Left ventricle myocardium superior (tissue), 1 donor: ENCODE measurements at regions of chr11 and their contacts with region 1.

Region 1: DNA sequence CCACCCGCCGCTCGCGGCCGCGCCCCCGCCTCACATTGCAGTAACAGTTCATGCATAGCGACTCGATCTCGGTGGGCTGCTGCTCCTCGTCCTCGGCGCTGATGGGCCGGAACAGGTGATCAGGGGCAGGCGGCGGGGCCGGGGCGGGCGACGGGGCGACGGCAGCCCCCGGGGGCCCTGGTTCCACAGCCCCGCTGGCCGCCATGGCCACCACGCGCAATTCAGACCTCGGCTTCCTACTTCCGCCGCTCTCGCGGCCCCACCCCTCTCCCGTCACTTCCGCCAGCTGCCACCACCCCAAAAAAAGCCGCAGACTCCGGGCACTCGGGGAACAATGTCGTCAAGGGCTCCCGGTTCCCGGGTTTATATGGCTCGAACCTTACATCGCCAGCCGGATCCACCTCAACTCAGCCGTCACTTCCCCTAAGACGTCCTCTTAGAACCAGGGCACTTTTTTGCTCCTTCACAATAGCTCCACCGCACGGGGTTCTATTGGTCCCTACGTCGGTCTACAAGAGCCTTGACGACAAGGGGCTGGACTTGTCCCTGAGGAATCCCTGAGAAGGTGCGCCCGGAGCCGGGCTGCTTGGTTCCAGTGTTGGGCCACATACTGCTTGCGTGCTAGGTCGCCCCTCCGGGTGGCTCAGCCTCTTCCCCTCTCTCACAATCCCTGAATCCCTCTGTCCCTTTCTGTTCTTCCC is at the start of gene ZPR1:
- DNase-seq: peak; percentile 89
- ATAC-seq: peak; percentile 87
- total RNA-seq, gene ZPR1: 18.2 TPM

Region 2: GRCh38 chr11:116835791-116836631 is 48.1 kb after region 1 on chr11:
- intact Hi-C with region 1: loop called (anchors 2 kb)
- DNase-seq: peak; percentile 95
- ATAC-seq: peak; percentile 87